ENCODE measurements at regions of chr2 and their contacts with region 1.

Region 1: GRCh38 chr2:114049826-114050225 is 159.9 kb downstream of the ACTR3 start:
- DNase-seq: peak; percentile 51
- H3K4me3 Mint-ChIP-seq: no peak overlapping the region
- H3K27ac Mint-ChIP-seq: peak overlapping the region; percentile 67
- H3K4me1 Mint-ChIP-seq: no peaks in the 10 kb centered on the region
- H3K27me3 Mint-ChIP-seq: peaks cover 16% of the 10 kb centered on the region
- CTCF ChIP-seq: no peak

Region 2: GRCh38 chr2:114022360-114023085 is 27.3 kb before region 1 on chr2:
- CTCF ChIA-PET with region 1: no interaction called
- POLR2A ChIA-PET with region 1: no interaction called
- intact Hi-C with region 1: loop called (anchors 1 kb)
- DNase-seq: peak; percentile 79
- H3K4me3 Mint-ChIP-seq: no peak overlapping the region
- H3K27ac Mint-ChIP-seq: peak overlapping the region; percentile 53
- H3K4me1 Mint-ChIP-seq: no peaks in the 10 kb centered on the region
- H3K27me3 Mint-ChIP-seq: no peaks in the 10 kb centered on the region
- CTCF ChIP-seq: no peak

Region 3: DNA sequence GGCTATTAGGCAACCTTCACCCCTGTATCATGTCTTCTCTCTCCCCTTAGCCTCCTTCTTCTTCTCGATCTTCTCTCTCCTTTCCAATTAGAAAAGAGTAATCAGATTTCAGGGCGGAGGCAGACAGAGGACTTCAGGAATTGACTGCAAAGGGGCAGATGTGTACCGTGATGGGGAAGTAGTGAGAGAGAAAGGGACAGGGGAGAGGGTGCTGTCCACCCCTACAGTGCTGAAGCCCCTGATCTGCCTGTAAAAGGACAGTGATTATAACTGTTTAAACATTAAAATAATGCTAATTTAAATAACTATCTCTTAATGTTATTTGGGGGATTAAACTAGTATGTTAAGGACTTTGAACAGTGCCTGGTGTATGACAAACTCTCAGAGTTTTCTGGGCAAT is 18.6 kb after region 1 on chr2:
- CTCF ChIA-PET with region 1: no interaction called
- POLR2A ChIA-PET with region 1: no interaction called
- intact Hi-C with region 1: no loop called
- DNase-seq: peak; percentile 32
- H3K4me3 Mint-ChIP-seq: no peak overlapping the region
- H3K27ac Mint-ChIP-seq: no peak overlapping the region
- H3K4me1 Mint-ChIP-seq: no peaks in the 10 kb centered on the region
- H3K27me3 Mint-ChIP-seq: peaks cover 51% of the 10 kb centered on the region
- CTCF ChIP-seq: no peak